Endothelial cell of umbilical vein (primary cell): ENCODE measurements at regions of chr13 and their contacts with region 1.

Region 1: DNA sequence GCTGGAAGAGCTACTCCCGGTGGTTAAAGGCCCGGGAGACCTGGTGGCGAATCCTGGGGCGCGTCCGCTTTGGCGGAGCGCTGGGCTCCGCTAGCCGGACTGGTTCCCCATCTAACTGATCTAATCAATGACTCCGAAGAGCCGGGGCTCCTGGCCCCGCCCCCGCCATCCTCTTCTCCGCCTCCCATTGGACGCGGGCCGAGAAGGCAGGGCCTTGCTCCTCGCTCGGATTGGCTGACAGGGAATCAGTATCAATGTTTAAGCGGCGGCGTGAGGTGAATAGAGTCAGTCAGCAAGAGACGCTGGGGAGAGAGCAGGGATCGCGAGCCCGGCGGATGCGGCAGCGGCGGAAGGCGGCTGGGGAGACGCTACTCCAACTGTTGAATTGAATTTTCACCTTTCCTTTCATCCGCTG is 1.7 kb upstream of the PCDH17 start:
- DNase-seq: peak; percentile 95
- H3K4me3 ChIP-seq: peak overlapping the region; percentile 46 to 75 (median 68)
- H3K27ac ChIP-seq: no peak overlapping the region
- H3K4me1 ChIP-seq: peaks cover 24% of the 10 kb centered on the region
- H3K27me3 ChIP-seq: peaks cover 5 to 11% of the 10 kb centered on the region in 2 experiments
- CTCF ChIP-seq: no peak
- POLR2A ChIP-seq: peak; percentile 84

Region 2: GRCh38 chr13:57056601-57057180 is 573.1 kb before region 1 on chr13:
- CTCF ChIA-PET with region 1: no interaction called
- POLR2A ChIA-PET with region 1: no interaction called
- dilution Hi-C with region 1: no loop called
- intact Hi-C with region 1: no loop called
- DNase-seq: no peak
- H3K4me3 ChIP-seq: no peak overlapping the region
- H3K27ac ChIP-seq: no peak overlapping the region
- H3K4me1 ChIP-seq: no peaks in the 10 kb centered on the region
- H3K27me3 ChIP-seq: no peaks in the 10 kb centered on the region
- CTCF ChIP-seq: no peak
- POLR2A ChIP-seq: no peak

Region 3: DNA sequence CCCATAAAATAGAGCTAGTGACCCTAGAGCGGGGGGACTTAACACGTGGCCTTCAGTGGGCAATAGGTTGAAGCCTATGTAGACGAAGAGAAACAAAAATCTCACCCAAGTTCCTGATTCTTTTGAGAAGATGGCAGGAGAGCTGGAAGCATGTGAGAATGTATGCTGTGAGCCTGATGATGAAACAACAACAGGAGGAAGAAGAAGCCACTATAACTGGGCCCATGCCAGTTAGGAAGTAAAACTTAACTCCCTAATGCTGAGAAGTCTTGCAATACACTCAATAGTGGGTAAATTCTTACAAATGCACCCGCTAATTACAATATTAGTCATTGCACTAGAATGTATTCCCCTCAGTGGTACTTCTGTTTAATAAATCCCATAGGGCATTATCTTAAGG is 10.8 kb after region 1 on chr13:
- CTCF ChIA-PET with region 1: interaction called, 57 read pairs
- POLR2A ChIA-PET with region 1: no interaction called
- dilution Hi-C with region 1: no loop called
- intact Hi-C with region 1: no loop called
- DNase-seq: no peak
- H3K4me3 ChIP-seq: no peak overlapping the region
- H3K27ac ChIP-seq: no peak overlapping the region
- H3K4me1 ChIP-seq: peaks cover under 1% of the 10 kb centered on the region
- H3K27me3 ChIP-seq: no peaks in the 10 kb centered on the region
- CTCF ChIP-seq: no peak
- POLR2A ChIP-seq: no peak

Region 4: DNA sequence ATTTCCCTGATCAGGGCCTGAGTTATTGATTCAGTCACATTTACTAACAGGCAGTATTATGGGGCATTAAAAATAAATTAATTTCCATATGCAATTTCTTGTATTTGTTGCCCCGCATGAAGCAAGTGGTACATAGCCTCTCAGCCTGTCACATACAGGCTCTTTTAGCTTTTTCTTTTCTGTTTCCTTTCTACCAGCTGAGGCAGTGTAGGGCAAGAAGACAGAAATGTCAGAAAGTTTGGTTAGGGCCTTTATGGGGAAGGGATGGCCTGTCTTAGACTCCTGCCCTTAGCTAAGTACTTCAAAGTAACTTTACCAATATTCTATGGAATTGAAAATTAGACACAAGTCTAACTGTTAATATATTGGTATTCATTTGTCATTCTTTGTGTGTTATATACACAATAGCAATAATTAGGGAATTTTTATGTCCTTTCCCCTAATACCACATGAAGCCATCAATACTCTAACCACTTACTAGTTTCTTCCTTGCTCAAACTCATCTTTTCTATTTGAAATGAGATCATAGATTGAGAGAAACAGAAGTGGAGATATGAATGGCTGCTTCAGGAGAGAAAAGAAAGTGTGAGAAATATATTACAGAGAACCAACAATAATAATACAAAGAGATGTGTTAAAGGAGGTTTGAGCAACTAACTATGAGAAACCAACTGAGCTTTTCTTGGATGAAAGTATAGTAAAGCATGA is 671.3 kb after region 1 on chr13:
- CTCF ChIA-PET with region 1: interaction called, 4 read pairs
- POLR2A ChIA-PET with region 1: no interaction called
- dilution Hi-C with region 1: no loop called
- intact Hi-C with region 1: loop called (anchors 10 kb)
- DNase-seq: no peak
- H3K4me3 ChIP-seq: no peak overlapping the region
- H3K27ac ChIP-seq: no peak overlapping the region
- H3K4me1 ChIP-seq: peaks cover 14% of the 10 kb centered on the region
- H3K27me3 ChIP-seq: no peaks in the 10 kb centered on the region
- CTCF ChIP-seq: no peak
- POLR2A ChIP-seq: no peak

Region 5: GRCh38 chr13:58960888-58961287 is 1331.1 kb after region 1 on chr13:
- CTCF ChIA-PET with region 1: interaction called, 34 read pairs
- POLR2A ChIA-PET with region 1: no interaction called
- dilution Hi-C with region 1: no loop called
- intact Hi-C with region 1: loop called (anchors 1 kb)
- DNase-seq: peak; percentile 33
- H3K4me3 ChIP-seq: no peak overlapping the region
- H3K27ac ChIP-seq: no peak overlapping the region
- H3K4me1 ChIP-seq: no peaks in the 10 kb centered on the region
- H3K27me3 ChIP-seq: no peaks in the 10 kb centered on the region
- CTCF ChIP-seq: peak in 1 of 2 donors; percentile 8
- POLR2A ChIP-seq: no peak

Region 6: GRCh38 chr13:59261928-59262488 is 1632.2 kb after region 1 on chr13:
- CTCF ChIA-PET with region 1: interaction called, 8 read pairs
- POLR2A ChIA-PET with region 1: no interaction called
- dilution Hi-C with region 1: no loop called
- intact Hi-C with region 1: loop called (anchors 1 kb)
- DNase-seq: peak; percentile 16
- H3K4me3 ChIP-seq: no peak overlapping the region
- H3K27ac ChIP-seq: no peak overlapping the region
- H3K4me1 ChIP-seq: peaks cover 19% of the 10 kb centered on the region
- H3K27me3 ChIP-seq: no peaks in the 10 kb centered on the region
- CTCF ChIP-seq: no peak
- POLR2A ChIP-seq: no peak

Region 7: GRCh38 chr13:59318320-59318930 is 1688.6 kb after region 1 on chr13:
- CTCF ChIA-PET with region 1: interaction called, 41 read pairs
- POLR2A ChIA-PET with region 1: no interaction called
- dilution Hi-C with region 1: no loop called
- intact Hi-C with region 1: loop called (anchors 2 kb)
- DNase-seq: peak; percentile 86
- H3K4me3 ChIP-seq: no peak overlapping the region
- H3K27ac ChIP-seq: no peak overlapping the region
- H3K4me1 ChIP-seq: peaks cover 23% of the 10 kb centered on the region
- H3K27me3 ChIP-seq: no peaks in the 10 kb centered on the region
- CTCF ChIP-seq: peak; percentile 68 to 71
- POLR2A ChIP-seq: no peak

Region 8: GRCh38 chr13:59458908-59459579 is 1829.2 kb after region 1 on chr13:
- CTCF ChIA-PET with region 1: no interaction called
- POLR2A ChIA-PET with region 1: no interaction called
- dilution Hi-C with region 1: no loop called
- intact Hi-C with region 1: loop called (anchors 10 kb)
- DNase-seq: peak; percentile 91
- H3K4me3 ChIP-seq: peak overlapping the region in 1 of 3 experiments; percentile 8
- H3K27ac ChIP-seq: peak overlapping the region; percentile 87
- H3K4me1 ChIP-seq: peaks cover 36% of the 10 kb centered on the region
- H3K27me3 ChIP-seq: no peaks in the 10 kb centered on the region
- CTCF ChIP-seq: no peak
- POLR2A ChIP-seq: no peak